Activated naive CD4-positive, alpha-beta T cell treated with anti-CD3 and anti-CD28 coated beads for 36 hours (primary cell): ENCODE measurements at regions of chr1 and their contacts with region 1.

Region 1: GRCh38 chr1:78839704-78840277 is 166.7 kb downstream of the ADGRL4 start:
- DNase-seq: peak; percentile 30
- H3K4me3 Mint-ChIP-seq: no peak overlapping the region
- H3K27ac Mint-ChIP-seq: no peak overlapping the region
- H3K4me1 Mint-ChIP-seq: peaks cover 11% of the 10 kb centered on the region
- H3K27me3 Mint-ChIP-seq: no peaks in the 10 kb centered on the region

Region 2: GRCh38 chr1:78132174-78132947 is 707.4 kb before region 1 on chr1:
- CTCF ChIA-PET with region 1: no interaction called
- intact Hi-C with region 1: loop called (anchors 10 kb)
- DNase-seq: no peak
- H3K4me3 Mint-ChIP-seq: no peak overlapping the region
- H3K27ac Mint-ChIP-seq: no peak overlapping the region
- H3K4me1 Mint-ChIP-seq: no peaks in the 10 kb centered on the region
- H3K27me3 Mint-ChIP-seq: no peaks in the 10 kb centered on the region

Region 3: DNA sequence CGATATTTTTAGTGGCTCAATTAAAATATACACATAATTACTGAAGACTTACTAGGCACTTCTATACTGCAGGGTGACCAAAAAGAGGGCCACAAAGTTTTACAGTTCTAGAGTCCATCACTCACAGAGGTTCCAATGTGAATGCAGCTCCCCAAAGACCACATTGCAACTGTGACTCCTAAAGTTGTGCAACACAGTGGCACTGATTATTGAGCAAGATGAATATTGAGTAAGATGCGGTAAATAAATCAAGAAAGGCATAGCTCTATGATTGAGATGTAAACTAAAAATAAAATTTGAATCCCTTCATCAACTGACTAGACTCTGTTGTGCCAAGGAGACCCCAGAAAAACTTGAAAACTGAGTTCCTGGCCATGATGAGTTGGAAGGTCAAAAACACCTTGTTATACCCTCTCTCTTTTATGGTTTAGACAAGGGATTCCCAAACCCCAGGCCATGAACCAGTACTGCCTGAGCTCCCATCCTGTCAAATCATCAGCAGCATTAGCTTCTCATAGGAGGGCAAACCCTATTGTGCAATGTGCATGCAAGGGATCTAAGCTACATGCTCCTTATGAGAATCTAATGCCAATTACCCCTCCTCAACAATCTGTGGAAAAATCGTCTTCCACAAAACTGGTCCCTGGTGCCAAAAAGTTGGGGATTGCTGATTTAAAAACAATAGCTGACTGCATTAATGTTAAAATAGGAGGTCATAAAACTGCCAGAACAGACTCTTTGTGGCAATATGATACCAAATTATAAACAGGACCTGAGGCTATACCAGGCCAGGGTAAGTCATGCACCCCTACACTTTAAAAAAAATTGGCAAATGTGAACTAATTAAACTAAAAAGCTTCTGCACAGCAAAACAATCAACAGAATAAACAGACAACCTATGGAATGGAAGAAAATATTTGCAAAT is 72.4 kb after region 1 on chr1:
- CTCF ChIA-PET with region 1: no interaction called
- intact Hi-C with region 1: no loop called
- DNase-seq: no peak
- H3K4me3 Mint-ChIP-seq: no peak overlapping the region
- H3K27ac Mint-ChIP-seq: no peak overlapping the region
- H3K4me1 Mint-ChIP-seq: no peaks in the 10 kb centered on the region
- H3K27me3 Mint-ChIP-seq: no peaks in the 10 kb centered on the region

Region 4: DNA sequence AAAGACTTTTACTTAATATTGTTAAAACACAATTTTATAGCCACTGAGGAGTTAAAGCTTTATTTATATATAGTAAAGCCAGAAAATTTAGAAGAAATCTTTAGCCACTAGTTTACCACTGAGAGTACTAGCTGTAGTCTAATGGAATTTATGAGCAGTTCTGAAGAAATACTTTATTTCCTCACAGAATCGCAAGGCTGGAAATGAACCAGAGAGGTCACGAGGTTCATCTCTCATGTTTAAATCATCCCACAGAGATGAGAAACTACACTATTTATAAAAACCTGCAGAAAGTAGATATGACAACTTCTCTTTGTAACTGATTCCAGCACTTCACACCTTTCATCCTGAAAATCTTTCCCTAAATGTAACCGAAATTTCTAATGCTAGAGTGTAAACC is 140.7 kb after region 1 on chr1:
- CTCF ChIA-PET with region 1: no interaction called
- intact Hi-C with region 1: no loop called
- DNase-seq: no peak
- H3K4me3 Mint-ChIP-seq: no peak overlapping the region
- H3K27ac Mint-ChIP-seq: no peak overlapping the region
- H3K4me1 Mint-ChIP-seq: no peaks in the 10 kb centered on the region
- H3K27me3 Mint-ChIP-seq: no peaks in the 10 kb centered on the region

Region 5: DNA sequence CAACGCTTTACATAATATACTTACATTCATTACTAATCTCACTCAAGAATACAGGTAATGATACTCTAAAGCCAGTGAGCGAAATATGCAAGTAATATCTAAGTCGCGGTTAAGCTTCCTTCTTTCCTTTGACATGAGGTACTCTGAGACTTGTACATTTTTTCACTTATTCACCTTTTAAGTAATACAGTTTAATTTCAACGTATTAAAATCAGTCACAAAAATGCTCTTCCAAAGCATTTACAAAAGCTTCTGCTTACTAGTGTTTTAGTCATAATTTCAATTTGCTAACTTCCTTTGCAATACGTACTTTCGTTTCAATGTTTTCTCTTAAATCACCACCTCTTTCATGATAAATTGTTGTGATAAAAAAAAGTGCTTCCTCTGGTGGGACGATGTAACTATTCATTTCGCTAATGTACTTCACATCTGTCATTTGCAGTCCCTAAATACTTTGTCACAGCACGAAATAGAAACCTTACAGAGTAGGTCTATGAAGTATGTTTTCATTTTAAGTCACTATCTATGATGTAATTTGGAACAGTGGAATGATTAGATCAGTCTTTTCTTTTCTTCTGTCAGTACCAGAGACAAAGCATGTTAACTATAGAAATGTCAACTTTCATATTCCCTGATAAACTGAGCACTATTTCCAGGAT is 200.8 kb after region 1 on chr1:
- CTCF ChIA-PET with region 1: no interaction called
- intact Hi-C with region 1: loop called (anchors 1 kb)
- DNase-seq: no peak
- H3K4me3 Mint-ChIP-seq: no peak overlapping the region
- H3K27ac Mint-ChIP-seq: peak overlapping the region; percentile 62
- H3K4me1 Mint-ChIP-seq: peaks cover 10% of the 10 kb centered on the region
- H3K27me3 Mint-ChIP-seq: no peaks in the 10 kb centered on the region

Region 6: GRCh38 chr1:79197421-79197820 is 357.6 kb after region 1 on chr1:
- CTCF ChIA-PET with region 1: no interaction called
- intact Hi-C with region 1: loop called (anchors 5 kb)
- DNase-seq: no peak
- H3K4me3 Mint-ChIP-seq: no peak overlapping the region
- H3K27ac Mint-ChIP-seq: no peak overlapping the region
- H3K4me1 Mint-ChIP-seq: no peaks in the 10 kb centered on the region
- H3K27me3 Mint-ChIP-seq: no peaks in the 10 kb centered on the region